HCT116 (cell line): ENCODE measurements at regions of chr3 and their contacts with region 1.

Region 1: GRCh38 chr3:51682079-51682478 is 11.0 kb downstream of the TEX264 start:
- DNase-seq: peak; percentile 72
- ATAC-seq: peak; percentile 97
- H3K4me3 ChIP-seq: no peak overlapping the region
- H3K27ac ChIP-seq: no peak overlapping the region
- H3K4me1 ChIP-seq: peaks cover 6 to 11% of the 10 kb centered on the region in 2 experiments
- H3K27me3 ChIP-seq: no peaks in the 10 kb centered on the region
- CTCF ChIP-seq: peak; percentile 84 to 87 (median 85)
- POLR2A ChIP-seq: no peak
- RAD21 ChIP-seq: peak; percentile 91

Region 2: DNA sequence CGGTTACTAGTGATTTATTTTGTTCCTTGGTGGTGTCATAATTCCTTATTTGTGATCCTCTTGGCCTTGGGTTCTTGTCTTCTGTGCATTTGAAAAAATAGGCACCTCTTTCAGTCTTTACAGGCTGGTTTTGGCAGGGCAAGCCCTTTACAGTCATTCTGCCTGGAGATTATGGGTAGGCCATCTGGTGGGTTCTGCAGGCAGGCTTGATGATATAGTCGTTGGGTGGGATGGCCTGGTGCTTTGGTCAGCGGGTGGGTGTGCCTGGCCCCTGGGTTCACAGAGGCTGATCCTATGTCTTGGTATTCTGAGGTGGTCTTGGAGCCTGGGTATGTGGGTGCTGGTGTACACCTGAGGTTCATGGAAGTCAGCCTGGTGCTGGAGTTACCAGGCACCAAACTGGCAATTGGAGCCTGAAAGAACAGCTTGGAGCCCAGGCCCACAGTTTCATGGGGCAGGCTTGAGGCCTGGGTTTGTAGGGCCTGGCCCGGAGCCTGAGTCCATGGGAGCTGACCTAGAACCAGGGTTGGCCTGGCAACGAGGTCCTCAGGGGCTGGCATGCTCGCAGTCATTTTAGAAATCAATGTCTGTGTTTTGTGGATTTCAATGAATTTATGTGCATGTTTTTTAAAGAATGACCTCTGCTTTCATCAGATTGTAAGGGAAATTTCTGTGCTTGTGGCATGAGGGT is 944.0 kb before region 1 on chr3:
- CTCF ChIA-PET with region 1: no interaction called
- POLR2A ChIA-PET with region 1: no interaction called
- RAD21 ChIA-PET with region 1: no interaction called
- intact Hi-C with region 1: no loop called
- DNase-seq: no peak
- ATAC-seq: no peak
- H3K4me3 ChIP-seq: no peak overlapping the region
- H3K27ac ChIP-seq: no peak overlapping the region
- H3K4me1 ChIP-seq: no peaks in the 10 kb centered on the region
- H3K27me3 ChIP-seq: no peaks in the 10 kb centered on the region
- CTCF ChIP-seq: no peak
- POLR2A ChIP-seq: no peak
- RAD21 ChIP-seq: no peak

Region 3: GRCh38 chr3:51391075-51391567 is 291.0 kb before region 1 on chr3 and contains the start of gene RBM15B:
- CTCF ChIA-PET with region 1: interaction called, 10 read pairs
- POLR2A ChIA-PET with region 1: no interaction called
- RAD21 ChIA-PET with region 1: no interaction called
- intact Hi-C with region 1: loop called (anchors 2 kb)
- DNase-seq: peak; percentile 92
- ATAC-seq: peak; percentile 91
- H3K4me3 ChIP-seq: peak within 1 kb of the TSS; percentile 57 to 59
- H3K27ac ChIP-seq: peak within 1 kb of the TSS; percentile 77
- H3K4me1 ChIP-seq: peaks cover 21 to 44% of the 10 kb centered on the region in 2 experiments; a peak in 3 of 4 replicates
- H3K27me3 ChIP-seq: no peaks in the 10 kb centered on the region
- CTCF ChIP-seq: peak in 1 of 3 experiments; percentile 84; a peak in 2 of 6 replicates
- POLR2A ChIP-seq: no peak
- RAD21 ChIP-seq: no peak
- total RNA-seq, gene RBM15B: 24.1 TPM

Region 4: DNA sequence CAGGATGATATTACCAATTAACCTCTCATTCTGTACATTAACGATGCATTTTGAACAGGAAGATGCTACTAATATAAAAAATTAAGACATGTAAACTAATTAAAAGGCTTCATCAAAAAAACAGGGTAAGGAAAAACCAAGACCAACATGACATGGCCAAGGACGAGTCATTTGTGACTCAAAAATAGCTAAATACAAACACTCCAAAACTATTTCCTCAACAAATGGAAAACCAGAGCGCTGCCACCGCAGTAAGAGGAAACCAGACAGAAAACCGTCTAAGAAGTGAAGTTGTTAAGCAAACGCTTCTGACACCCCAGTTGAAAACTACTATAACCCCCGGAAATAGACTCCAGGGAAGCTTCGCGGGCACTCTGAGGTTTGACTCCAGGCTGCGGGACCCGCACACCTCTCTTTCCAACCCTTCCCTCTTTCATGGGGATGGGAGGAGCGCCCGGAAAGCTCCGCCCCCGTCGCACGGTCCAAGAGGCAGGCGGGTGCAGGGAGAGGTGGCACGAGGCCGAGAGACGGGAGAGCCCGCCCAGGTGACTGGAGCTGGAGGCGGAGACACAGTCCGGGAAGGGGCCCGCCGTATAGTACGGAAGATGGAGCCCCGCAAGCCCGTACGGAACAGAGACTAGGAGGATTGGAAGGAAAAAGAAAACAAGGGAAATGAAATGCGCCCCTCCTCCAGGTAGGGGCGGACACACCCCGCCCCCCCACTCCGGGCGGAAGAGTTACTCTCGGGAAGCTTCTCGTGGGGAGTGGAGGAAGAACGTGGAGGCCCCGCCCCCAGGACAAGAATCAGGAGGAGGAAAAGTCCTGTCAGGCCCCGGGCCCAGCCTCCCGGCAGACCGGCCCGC is 183.0 kb before region 1 on chr3:
- CTCF ChIA-PET with region 1: interaction called, 98 read pairs
- POLR2A ChIA-PET with region 1: interaction called, 8 read pairs
- RAD21 ChIA-PET with region 1: interaction called, 8 to 19 read pairs
- intact Hi-C with region 1: loop called (anchors 1 kb)
- DNase-seq: peak; percentile 84
- ATAC-seq: peak; percentile 81
- H3K4me3 ChIP-seq: peak overlapping the region; percentile 62 to 72
- H3K27ac ChIP-seq: peak overlapping the region; percentile 89
- H3K4me1 ChIP-seq: peaks cover 10 to 17% of the 10 kb centered on the region in 2 experiments; a peak in 3 of 4 replicates
- H3K27me3 ChIP-seq: no peaks in the 10 kb centered on the region
- CTCF ChIP-seq: no peak
- POLR2A ChIP-seq: peak; percentile 9
- RAD21 ChIP-seq: no peak

Region 5: DNA sequence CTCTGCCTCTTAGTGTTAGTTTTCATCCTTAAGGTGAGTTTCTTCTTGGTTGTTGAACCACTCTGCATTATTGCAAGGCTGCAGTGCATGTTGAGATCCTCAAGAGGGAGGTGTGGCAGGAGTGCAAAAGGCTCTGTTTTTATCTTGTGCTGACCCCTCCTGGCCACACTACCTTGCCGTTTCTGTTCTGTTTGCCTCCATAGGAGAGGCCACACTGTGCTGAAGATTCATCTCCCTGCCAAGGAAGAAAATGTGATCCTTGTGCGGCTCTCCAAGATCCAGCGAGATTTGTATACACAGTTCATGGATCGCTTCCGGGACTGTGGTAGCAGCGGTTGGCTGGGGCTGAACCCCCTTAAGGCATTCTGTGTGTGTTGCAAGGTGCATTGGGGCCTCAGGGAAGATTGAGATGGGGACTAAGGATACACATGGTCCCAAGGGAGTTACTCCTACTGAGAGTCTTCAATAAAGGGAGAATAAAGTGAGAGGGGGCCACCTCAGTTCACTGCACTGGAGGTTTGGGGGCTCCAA is 44.1 kb before region 1 on chr3:
- CTCF ChIA-PET with region 1: interaction called, 13 read pairs
- POLR2A ChIA-PET with region 1: no interaction called
- RAD21 ChIA-PET with region 1: no interaction called
- intact Hi-C with region 1: loop called (anchors 5 kb)
- DNase-seq: peak; percentile 73
- ATAC-seq: peak; percentile 97
- H3K4me3 ChIP-seq: no peak overlapping the region
- H3K27ac ChIP-seq: no peak overlapping the region
- H3K4me1 ChIP-seq: no peaks in the 10 kb centered on the region; a peak in 1 of 4 replicates
- H3K27me3 ChIP-seq: no peaks in the 10 kb centered on the region
- CTCF ChIP-seq: peak; percentile 94 to 99 (median 95)
- POLR2A ChIP-seq: no peak
- RAD21 ChIP-seq: peak; percentile 82

Region 6: GRCh38 chr3:52978109-52978754 is 1296.2 kb after region 1 on chr3:
- CTCF ChIA-PET with region 1: no interaction called
- POLR2A ChIA-PET with region 1: no interaction called
- RAD21 ChIA-PET with region 1: no interaction called
- intact Hi-C with region 1: no loop called
- DNase-seq: no peak
- ATAC-seq: no peak
- H3K4me3 ChIP-seq: no peak overlapping the region
- H3K27ac ChIP-seq: no peak overlapping the region
- H3K4me1 ChIP-seq: no peaks in the 10 kb centered on the region; a peak in 1 of 4 replicates
- H3K27me3 ChIP-seq: no peaks in the 10 kb centered on the region
- CTCF ChIP-seq: no peak
- POLR2A ChIP-seq: no peak
- RAD21 ChIP-seq: no peak